Sigmoid colon (tissue), 7 donors: ENCODE measurements at regions of chr7 and their contacts with region 1.

Region 1: DNA sequence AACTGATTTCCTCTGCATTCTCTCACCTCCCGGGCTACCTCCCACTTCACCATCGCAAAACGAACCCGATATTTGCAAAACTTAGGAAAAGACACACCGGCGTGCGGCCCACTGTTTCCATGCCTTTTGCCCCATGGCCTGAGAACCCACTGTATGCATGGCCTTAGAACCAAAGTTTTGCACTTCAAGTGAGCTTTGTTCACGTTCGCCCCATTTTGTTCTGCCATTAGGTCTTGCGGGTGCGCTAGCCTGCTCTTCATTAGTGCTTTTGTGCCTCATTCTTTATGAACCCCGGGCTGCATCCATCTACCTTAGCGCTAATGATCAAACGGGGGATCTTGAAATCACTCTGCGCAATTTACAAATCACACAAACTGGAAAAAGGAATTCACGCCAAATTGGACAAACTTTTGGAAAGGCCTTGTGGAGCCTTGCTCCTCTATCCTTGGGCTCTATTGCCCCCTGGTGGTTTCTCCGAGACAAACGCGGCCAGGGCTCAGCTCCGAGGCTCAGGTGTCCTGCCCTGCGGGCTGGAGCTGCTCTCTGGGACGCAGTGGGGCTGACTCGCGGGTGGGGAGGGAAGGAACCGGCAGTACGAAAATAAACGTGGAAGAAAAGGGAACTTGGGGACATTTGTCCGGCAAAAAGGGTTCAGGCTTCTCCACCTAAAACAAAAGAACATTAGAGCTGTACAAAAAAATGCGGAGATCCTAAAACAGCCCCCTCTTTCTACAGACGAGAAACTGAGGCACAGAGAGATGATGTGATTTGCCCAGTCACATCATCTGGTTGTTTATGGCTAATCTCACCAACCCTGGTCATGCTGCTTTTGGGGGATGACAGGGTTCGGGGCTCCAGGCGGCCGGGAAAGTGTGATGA is 300.4 kb upstream of the NFE2L3 start:
- DNase-seq: peak; percentile 94
- H3K4me3 ChIP-seq: peak overlapping the region in 2 of 4 donors; percentile 32 to 36
- H3K27ac ChIP-seq: peak overlapping the region; percentile 79 to 95 (median 83)
- H3K4me1 ChIP-seq: peaks cover 0 to 86% (median 77%) of the 10 kb centered on the region in 4 donors
- H3K27me3 ChIP-seq: peaks cover 0 to 47% (median 6%) of the 10 kb centered on the region in 3 donors
- CTCF ChIP-seq: peak; percentile 81 to 94 (median 93)
- EP300 ChIP-seq: no peak
- POLR2A ChIP-seq: no peak

Region 2: DNA sequence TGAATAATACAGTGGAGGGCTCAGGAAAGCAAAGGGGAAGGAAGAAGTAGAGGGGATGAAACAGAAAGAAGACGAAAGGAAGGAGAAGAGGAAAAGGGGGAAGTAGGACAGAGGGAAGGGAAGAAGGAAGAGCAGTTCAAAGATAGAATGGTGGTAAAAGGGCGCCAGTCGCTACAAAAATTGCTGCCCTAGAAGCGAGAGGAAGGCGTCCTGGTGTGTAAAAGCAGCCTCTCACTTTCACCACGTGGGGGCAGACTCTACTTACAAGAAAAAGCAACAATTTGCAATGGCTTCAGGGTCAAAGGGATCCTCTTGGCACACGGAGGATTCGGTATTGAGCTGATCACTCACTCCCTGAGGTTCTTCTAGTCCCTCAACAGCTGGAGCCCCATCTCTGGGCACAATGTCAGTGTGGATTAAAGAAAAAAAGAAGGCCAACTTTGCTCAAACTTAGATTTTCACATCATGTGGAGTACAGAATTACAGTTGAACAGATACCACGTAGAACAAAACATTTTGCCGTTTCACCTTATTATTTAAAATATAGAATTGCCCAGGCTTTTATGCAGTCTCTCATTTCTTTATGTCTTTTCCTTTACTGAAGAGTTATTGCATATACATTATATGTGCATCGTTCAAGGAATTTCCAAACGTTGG is 591.9 kb before region 1 on chr7:
- intact Hi-C with region 1: loop called (anchors 2 kb)
- DNase-seq: peak; percentile 80
- H3K4me3 ChIP-seq: no peak overlapping the region
- H3K27ac ChIP-seq: no peak overlapping the region
- H3K4me1 ChIP-seq: peaks cover 0 to 26% (median 18%) of the 10 kb centered on the region in 4 donors
- H3K27me3 ChIP-seq: no peaks in the 10 kb centered on the region
- CTCF ChIP-seq: peak; percentile 73 to 86 (median 82)
- EP300 ChIP-seq: no peak
- POLR2A ChIP-seq: no peak

Region 3: DNA sequence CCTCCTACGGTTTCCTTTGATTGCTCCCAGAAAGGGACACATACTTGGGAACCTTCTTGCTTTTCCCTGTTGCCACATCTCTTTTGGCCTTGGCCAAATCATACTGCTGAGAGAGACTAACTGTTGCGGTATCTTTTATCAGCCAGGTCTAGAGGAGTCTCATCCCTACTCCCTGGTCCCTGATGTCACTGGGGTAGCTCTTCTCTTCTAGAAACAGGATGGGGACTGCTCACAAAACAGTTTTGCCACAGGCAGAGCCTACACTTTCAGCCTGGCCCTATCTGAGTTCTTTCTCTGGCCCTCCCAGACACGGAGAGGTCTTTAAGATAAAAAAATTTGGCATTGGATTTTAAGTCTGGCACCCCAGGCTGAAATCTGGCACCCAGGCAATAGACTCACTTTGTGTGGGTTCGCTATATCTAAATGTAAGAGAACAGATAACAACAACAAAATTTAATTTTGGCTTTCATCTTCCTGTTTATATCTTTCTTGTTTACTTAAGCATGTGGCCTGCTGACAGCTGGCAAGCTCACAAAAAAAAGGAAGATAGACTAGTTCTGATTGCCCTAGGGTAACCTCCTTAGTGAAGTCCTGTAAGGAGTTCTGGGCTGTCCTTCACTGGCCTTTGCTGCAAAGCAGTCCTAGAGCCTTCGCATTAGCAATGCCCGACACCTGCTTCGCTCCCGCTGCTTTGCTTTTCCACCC is 395.0 kb before region 1 on chr7:
- intact Hi-C with region 1: loop called (anchors 5 kb)
- DNase-seq: peak; percentile 68
- H3K4me3 ChIP-seq: no peak overlapping the region
- H3K27ac ChIP-seq: peak overlapping the region in 3 of 4 donors; percentile 50 to 61 (median 56)
- H3K4me1 ChIP-seq: peaks cover 0 to 29% (median 15%) of the 10 kb centered on the region in 4 donors
- H3K27me3 ChIP-seq: no peaks in the 10 kb centered on the region
- CTCF ChIP-seq: no peak
- EP300 ChIP-seq: peak in 1 of 4 donors; percentile 9
- POLR2A ChIP-seq: no peak

Region 4: GRCh38 chr7:25752967-25753791 is 98.4 kb before region 1 on chr7:
- intact Hi-C with region 1: loop called (anchors 2 kb)
- DNase-seq: no peak
- H3K4me3 ChIP-seq: no peak overlapping the region
- H3K27ac ChIP-seq: peak overlapping the region; percentile 82 to 89 (median 88)
- H3K4me1 ChIP-seq: peaks cover 0 to 75% (median 68%) of the 10 kb centered on the region in 4 donors
- H3K27me3 ChIP-seq: no peaks in the 10 kb centered on the region
- CTCF ChIP-seq: no peak
- EP300 ChIP-seq: no peak
- POLR2A ChIP-seq: no peak

Region 5: GRCh38 chr7:25789701-25790640 is 61.6 kb before region 1 on chr7:
- intact Hi-C with region 1: no loop called
- DNase-seq: no peak
- H3K4me3 ChIP-seq: no peak overlapping the region
- H3K27ac ChIP-seq: peak overlapping the region; percentile 46 to 79 (median 75)
- H3K4me1 ChIP-seq: peaks cover 0 to 65% (median 40%) of the 10 kb centered on the region in 4 donors
- H3K27me3 ChIP-seq: no peaks in the 10 kb centered on the region
- CTCF ChIP-seq: no peak
- EP300 ChIP-seq: no peak
- POLR2A ChIP-seq: no peak

Region 6: GRCh38 chr7:26224359-26224758 is 372.8 kb after region 1 on chr7:
- intact Hi-C with region 1: no loop called
- DNase-seq: no peak
- H3K4me3 ChIP-seq: no peak overlapping the region
- H3K27ac ChIP-seq: no peak overlapping the region
- H3K4me1 ChIP-seq: no peaks in the 10 kb centered on the region
- H3K27me3 ChIP-seq: peaks cover 0 to 4% (median under 1%) of the 10 kb centered on the region in 3 donors
- CTCF ChIP-seq: no peak
- EP300 ChIP-seq: no peak
- POLR2A ChIP-seq: no peak

Region 7: DNA sequence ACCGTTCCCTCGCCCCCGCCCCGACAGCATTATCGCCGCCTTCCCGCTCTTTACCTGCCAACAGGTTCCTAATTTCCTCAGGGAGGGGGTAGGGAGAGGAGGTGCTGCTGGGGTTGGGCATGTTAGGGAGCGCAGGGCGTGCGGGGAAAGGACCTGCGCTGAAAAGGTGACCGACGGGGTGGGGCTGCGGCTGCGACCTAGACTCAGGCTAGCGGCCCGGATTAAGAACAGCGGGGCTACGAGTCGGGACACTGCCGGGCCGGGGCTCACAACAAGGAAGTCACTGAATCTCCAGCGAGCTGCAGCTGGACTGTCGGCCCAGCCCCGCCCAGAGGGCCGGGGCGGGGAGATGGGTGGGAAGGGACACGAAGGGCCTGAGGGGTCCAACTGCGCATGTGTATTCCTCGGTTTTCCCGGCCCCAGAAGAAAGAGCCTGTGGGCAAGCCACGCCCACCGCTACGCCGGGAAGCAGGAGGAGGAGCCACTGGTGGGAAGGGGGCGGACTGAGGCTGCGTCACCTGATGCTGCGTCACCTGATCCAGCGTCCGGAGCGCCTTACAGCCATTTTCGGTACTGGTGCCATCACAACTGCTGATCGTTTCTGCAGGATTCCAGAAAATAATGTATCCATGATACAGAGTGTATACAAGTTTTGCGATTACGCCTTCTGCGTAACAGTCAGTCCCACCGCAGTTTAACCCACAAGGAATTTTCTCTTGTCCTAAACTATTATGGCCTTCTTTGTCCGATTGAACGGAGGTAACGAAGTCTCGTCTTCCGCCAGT is 1012.9 kb after region 1 on chr7 and contains the start of gene SKAP2:
- intact Hi-C with region 1: loop called (anchors 5 kb)
- DNase-seq: peak; percentile 100
- H3K4me3 ChIP-seq: peak within 1 kb of the TSS; percentile 72 to 91 (median 82)
- H3K27ac ChIP-seq: peak within 1 kb of the TSS; percentile 89 to 98 (median 94)
- H3K4me1 ChIP-seq: no peaks in the 10 kb centered on the region
- H3K27me3 ChIP-seq: no peaks in the 10 kb centered on the region
- CTCF ChIP-seq: no peak
- EP300 ChIP-seq: peak in 1 of 4 donors; percentile 67
- POLR2A ChIP-seq: peak; percentile 91 to 92
- total RNA-seq, gene SKAP2: 13.0 to 19.3 (median 16.8) TPM

Region 8: DNA sequence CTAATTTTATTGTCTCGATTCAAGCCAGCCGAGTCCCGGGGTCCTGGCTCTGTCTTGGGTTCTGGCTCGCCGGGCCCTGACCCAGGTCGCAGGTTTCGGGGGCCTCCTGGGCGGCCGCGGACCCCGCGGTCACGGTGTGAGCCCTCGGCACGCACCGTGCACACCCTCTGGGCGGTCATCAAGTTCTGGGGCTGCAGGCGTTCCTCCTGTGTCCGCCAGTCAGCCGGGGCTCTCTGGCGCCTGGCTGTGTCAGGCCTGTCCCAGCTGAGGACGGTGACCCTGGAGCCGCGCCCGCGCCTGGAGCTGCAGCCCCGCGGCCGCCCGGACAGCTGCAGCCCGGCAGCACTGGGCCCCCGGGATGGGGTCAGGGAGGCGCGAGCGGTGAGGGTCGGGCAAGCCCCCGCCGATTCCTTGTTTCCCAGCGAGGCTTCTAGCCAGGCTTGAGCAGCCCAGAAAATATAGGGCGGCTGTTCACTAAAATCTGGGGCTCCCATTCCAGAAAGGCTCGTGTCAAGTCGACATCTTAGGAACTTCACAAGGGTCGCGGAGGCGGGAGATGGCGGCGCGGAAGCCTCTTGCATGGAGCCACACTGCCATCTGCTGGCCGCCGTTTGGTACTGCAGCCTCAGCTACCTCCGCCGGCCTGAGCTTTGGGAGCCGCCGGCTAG is 1309.1 kb after region 1 on chr7:
- intact Hi-C with region 1: loop called (anchors 5 kb)
- DNase-seq: peak; percentile 94
- H3K4me3 ChIP-seq: peak overlapping the region; percentile 38 to 85 (median 82)
- H3K27ac ChIP-seq: peak overlapping the region in 3 of 4 donors; percentile 97 to 98 (median 98)
- H3K4me1 ChIP-seq: peaks cover 0 to 44% (median 40%) of the 10 kb centered on the region in 4 donors
- H3K27me3 ChIP-seq: no peaks in the 10 kb centered on the region
- CTCF ChIP-seq: peak; percentile 98 to 100 (median 99)
- EP300 ChIP-seq: no peak
- POLR2A ChIP-seq: no peak